AG04449 (cell line): ENCODE measurements at regions of chr1 and their contacts with region 1.

Region 1: DNA sequence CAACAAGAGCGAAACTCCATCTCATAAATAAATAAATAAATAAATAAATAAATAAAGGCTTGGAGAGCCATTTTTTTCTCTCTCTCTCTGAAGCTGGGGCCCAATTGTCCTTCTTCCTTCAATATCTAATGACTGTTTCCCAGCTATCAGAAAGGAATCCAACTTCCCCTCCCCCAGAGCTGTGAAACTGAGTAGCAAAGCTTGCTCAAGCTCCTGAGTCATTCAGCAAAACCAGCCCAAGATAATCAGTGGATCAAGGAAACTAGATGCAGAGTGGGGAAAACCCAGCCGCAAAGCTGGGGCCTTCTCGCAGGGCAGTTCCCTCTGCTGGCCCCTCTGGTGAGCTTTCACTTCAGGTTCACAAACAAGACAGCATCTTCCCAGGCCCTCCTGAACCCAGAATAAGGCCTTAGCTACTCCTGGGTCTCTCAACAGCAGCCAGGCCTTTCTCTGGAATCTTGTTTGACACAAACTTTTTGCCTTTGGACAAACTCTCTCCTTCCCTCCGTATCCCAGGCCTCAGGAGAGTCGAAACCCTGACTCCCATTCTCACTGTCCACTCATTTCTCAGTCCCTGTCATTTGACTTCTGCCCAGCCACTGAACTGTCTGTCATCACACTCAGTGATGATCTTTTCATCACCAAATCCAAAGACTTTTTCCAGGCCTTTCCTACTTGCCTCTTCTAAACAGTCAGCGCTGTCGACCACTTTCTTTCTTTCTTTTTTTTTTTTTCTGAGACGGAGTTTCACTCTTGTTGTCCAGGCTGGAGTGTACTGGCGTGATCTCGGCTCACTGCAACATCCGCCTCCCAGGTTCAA is 18.0 kb upstream of the PTP4A2 start:
- DNase-seq: peak; percentile 99
- H3K4me3 ChIP-seq: no peak overlapping the region
- CTCF ChIP-seq: peak; percentile 72

Region 2: DNA sequence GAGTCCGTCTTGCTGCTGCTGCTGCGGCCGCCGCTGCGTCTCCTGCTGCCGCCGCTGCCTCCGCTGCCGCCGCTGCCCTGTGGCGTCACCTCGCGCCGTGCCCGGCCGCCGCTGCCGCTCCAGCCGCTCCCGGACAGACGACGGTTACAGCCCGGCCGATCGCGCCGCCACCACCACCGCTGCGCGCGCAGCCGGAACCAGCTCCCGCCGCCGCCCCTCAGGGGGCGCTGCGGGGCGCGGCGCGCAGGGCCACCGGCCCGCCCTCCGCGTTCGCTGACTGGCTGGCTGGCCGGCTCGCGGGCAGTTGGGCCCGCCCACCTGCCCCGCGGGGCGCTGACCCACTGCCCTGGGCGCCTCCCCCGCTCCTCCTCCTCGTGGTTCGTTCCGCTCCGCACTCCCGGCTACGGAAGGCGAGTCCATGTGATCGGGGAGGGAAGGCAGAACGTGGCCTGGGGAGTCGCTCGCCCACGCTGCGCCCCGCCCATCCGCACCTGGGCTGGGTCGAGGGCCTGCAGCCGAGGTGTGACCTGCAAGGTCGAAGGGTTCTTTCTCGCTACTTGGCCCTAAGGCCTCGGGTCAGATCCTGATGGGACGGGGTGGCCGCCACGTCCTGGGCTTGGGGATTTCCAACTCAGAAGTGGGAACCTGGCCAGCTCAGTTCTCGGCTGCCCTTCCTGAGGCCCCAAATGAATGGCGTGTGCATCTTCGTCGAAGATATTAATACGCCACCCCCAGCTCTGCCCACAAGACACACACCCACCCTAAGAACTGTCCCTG is 17.8 kb before region 1 on chr1 and contains the start of gene PTP4A2:
- CTCF ChIA-PET with region 1: interaction called, 102 read pairs
- POLR2A ChIA-PET with region 1: interaction called, 31 read pairs
- DNase-seq: no peak
- H3K4me3 ChIP-seq: peak within 1 kb of the TSS; percentile 97
- CTCF ChIP-seq: no peak

Region 3: DNA sequence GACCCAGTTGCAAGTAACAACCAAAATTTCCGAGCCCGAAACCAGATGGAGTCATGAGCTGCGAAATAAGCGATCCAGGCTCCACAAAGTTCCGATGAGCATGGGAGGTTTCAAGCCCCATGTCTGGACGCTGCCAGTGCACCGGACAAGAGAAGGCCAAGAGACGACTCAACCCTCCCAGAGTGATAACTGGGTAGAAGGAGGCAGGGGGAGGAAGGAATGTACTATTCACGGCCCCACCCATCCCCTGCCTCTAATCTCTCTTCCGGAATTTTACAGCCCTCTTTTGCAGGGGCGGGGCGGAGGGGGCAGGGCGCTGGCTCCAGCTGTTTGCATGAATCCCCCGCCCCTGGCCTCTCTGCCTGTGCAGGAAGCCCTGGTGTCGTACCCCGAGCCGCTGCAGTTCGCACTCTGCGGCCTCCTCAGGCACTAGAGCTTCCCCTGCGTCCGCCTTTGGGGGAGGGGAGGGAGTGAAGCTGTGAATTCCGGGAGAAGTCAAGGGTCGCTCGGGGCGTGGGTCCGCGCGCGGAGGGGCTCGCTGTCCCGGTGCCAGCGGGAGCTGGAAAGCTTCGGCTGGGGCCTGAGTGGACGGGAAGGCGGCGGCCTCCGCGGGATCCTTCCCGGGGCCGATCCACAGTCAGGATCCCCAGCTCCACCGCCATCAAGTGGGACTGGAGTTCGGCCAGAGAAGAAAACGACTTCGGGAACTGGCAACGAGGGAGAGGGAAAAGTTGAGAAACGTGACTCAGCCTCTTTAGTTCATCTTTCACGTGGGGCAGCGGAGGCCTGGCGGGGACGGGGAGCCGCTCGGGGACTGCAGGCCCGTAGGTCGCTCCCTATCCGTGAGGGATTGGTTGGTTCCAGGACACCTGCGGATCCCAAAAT is 11.7 kb before region 1 on chr1:
- CTCF ChIA-PET with region 1: interaction called, 102 read pairs
- POLR2A ChIA-PET with region 1: interaction called, 31 read pairs
- DNase-seq: no peak
- H3K4me3 ChIP-seq: peak overlapping the region; percentile 46
- CTCF ChIP-seq: no peak